ENCODE measurements at regions of chr13 and their contacts with region 1.

Region 1: GRCh38 chr13:44969551-44970484 is 19.5 kb downstream of the NUFIP1 start:
- DNase-seq: peak; percentile 13 to 35
- ATAC-seq: peak; percentile 74 to 75; a peak in 4 of 6 replicates
- H3K4me3 ChIP-seq: no peak overlapping the region
- H3K27ac ChIP-seq: peak overlapping the region; percentile 49 to 56; a peak in 3 of 6 replicates
- H3K4me1 ChIP-seq: peaks cover 26% of the 10 kb centered on the region
- CTCF ChIP-seq: peak; percentile 69
- EP300 ChIP-seq: no peak
- POLR2A ChIP-seq: no peak
- RAD21 ChIP-seq: peak; percentile 78 to 86

Region 2: GRCh38 chr13:44955406-44955805 is 14.4 kb before region 1 on chr13:
- CTCF ChIA-PET with region 1: interaction called, 17 read pairs
- POLR2A ChIA-PET with region 1: no interaction called
- DNase-seq: no peak
- ATAC-seq: no peak
- H3K4me3 ChIP-seq: no peak overlapping the region
- H3K27ac ChIP-seq: no peak overlapping the region
- H3K4me1 ChIP-seq: peaks cover 15% of the 10 kb centered on the region
- CTCF ChIP-seq: no peak
- EP300 ChIP-seq: no peak
- POLR2A ChIP-seq: no peak
- RAD21 ChIP-seq: no peak

Measured in A549 (cell line).